Heart right ventricle (tissue), 16 donors: ENCODE measurements at regions of chr18 and their contacts with region 1.

Region 1: GRCh38 chr18:32879497-32879896 is 106.7 kb upstream of the KLHL14 start:
- DNase-seq: no peak
- ATAC-seq: no peak
- H3K4me3 ChIP-seq: no peak overlapping the region
- H3K27ac ChIP-seq: no peak overlapping the region
- H3K4me1 ChIP-seq: no peaks in the 10 kb centered on the region
- H3K27me3 ChIP-seq: no peaks in the 10 kb centered on the region
- CTCF ChIP-seq: no peak

Region 2: DNA sequence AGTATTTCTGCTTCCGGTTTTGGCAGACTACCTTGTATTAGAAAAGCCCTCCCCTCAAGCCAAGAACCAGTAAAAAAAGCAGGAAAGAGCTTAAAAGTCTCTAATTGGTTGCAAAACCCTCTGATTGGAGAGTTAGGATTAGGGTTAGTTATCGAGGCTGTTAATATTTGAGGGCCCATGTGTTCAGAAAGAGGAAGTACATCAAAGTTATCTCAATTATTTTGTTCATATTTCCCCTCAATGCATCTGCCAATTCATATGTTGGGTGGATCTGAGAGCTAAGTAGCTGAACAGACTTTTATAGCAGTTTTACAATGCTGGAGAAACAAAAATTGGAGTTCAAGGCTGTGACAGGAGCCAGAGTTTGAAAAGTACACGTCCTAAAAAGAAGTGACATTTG is 63.6 kb before region 1 on chr18:
- intact Hi-C with region 1: loop called in 2 of 10 experiments (anchors 10 kb)
- DNase-seq: no peak
- ATAC-seq: no peak
- H3K4me3 ChIP-seq: no peak overlapping the region
- H3K27ac ChIP-seq: no peak overlapping the region
- H3K4me1 ChIP-seq: no peaks in the 10 kb centered on the region
- H3K27me3 ChIP-seq: peaks cover 0 to 3% (median 0%) of the 10 kb centered on the region in 7 donors
- CTCF ChIP-seq: no peak

Region 3: DNA sequence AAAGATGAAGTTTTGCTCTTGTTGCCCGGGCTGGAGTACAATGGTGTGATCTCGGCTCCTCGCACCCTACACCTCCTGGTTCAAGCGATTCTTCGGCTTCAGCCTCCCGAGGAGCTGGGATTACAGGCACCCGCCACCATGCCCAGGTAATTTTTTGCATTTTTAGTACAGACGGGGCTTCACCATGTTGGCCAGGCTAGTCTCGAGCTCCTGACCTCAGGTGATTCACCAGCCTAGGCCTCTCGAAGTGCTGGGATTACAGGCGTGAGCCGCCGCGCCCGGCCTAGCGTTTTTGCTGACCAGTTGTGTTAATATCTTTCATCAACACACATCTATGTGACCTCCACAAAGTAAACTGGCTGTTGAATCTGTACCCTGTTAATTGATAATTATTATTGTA is 57.3 kb before region 1 on chr18:
- intact Hi-C with region 1: loop called in 2 of 10 experiments (anchors 10 kb)
- DNase-seq: no peak
- ATAC-seq: no peak
- H3K4me3 ChIP-seq: no peak overlapping the region
- H3K27ac ChIP-seq: no peak overlapping the region
- H3K4me1 ChIP-seq: no peaks in the 10 kb centered on the region
- H3K27me3 ChIP-seq: no peaks in the 10 kb centered on the region
- CTCF ChIP-seq: no peak